OCI-LY7 (cell line): ENCODE measurements at regions of chr13 and their contacts with region 1.

Region 1: DNA sequence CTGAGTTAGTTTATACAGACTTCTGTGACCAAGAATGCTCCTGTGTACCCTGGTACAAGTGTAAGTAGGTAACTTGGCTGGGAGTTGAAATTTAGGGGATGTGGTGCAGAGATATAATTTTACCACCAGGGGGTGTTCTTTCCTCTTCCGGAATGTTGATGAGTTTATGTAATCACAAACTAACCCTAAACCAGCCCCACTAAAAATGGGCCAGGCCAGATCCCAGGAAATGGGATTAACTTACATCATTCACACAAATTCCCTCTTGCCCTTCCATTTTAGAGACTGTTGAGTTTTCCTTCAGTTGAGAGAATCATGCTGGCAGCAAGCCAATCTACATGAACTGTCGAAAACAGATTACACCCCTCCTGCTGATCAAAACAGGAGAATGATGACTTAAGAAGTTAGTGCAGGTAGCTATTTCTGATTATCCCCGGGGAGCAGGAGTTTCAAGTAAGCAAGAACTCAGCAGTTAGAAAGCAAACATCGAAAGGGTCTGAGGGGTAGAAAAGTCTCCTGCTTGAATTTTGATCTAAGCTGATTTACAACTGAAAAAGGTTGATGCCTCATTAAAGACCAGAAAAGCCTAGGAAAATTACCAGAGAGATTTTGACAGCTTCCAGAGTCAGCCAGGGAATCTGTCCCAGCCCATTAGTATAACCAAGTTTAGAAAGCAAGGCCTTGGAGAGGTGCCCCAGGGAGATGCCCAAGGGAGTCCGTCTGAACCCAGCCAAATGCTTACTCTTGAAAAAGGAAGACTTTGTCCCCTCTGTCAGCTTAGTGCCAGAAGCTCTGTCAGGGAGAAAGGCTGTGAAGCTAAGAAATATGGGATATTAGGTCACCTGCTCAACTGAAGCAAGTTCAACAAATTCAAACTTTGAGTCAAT is 32.3 kb upstream of the MED4 start:
- DNase-seq: peak; percentile 72
- H3K4me3 ChIP-seq: no peak overlapping the region
- H3K27ac ChIP-seq: no peak overlapping the region
- H3K4me1 ChIP-seq: peaks cover 4% of the 10 kb centered on the region
- CTCF ChIP-seq: peak; percentile 96

Region 2: GRCh38 chr13:48233046-48233907 is 106.1 kb after region 1 on chr13 and contains the start of gene ITM2B:
- CTCF ChIA-PET with region 1: no interaction called
- POLR2A ChIA-PET with region 1: interaction called, 5 read pairs
- intact Hi-C with region 1: loop called (anchors 1 kb)
- DNase-seq: peak; percentile 77
- H3K4me3 ChIP-seq: peak within 1 kb of the TSS; percentile 76
- H3K27ac ChIP-seq: peak within 1 kb of the TSS; percentile 49
- H3K4me1 ChIP-seq: peaks cover 31% of the 10 kb centered on the region
- CTCF ChIP-seq: peak; percentile 79
- total RNA-seq, gene ITM2B: 14.7 and 21.1 TPM in 2 replicates

Region 3: DNA sequence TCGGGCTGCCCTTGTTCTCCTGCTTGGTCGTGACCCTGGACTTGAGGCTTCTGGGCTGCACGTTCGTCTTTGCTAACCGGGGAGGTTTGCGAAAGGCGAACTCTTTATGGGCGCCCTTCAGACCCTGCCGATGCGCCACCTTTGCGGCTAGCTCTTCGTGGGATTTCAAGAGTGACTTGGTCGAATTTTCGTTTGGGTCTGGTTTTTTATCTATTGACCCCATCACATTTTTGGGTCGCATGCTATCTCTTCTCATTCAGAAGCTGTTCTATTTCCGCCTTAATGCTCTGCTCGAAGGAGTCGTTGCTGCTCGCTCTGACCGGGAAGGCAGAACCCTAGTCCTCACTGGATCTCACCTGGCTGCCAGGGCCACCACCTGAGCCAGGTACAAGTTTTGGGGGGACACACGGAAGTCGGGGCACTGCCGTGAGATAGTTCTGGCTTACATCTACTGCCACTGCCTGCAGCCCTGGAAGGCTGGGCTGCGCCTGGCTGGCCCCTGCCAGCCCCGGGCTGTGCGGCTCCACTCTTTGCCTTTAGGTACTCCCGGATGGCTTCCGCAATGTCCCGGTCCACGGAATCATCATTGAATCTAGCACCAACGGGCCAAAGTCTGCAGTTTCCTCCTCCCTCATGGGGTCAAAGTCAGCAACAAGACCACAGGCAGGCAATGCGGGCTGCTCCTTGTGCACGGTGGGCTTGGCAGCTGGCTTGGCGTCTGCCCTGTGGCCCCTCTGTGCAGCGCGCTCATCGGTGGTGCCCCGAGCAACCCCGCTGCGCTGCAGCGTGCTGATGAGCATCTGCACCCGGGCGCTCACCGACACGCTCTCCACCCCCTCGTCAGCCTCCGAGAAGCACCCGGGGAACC is 192.6 kb after region 1 on chr13:
- CTCF ChIA-PET with region 1: no interaction called
- POLR2A ChIA-PET with region 1: no interaction called
- intact Hi-C with region 1: no loop called
- DNase-seq: no peak
- H3K4me3 ChIP-seq: no peak overlapping the region
- H3K27ac ChIP-seq: no peak overlapping the region
- H3K4me1 ChIP-seq: no peaks in the 10 kb centered on the region
- CTCF ChIP-seq: no peak

Region 4: GRCh38 chr13:48731957-48732569 is 604.9 kb after region 1 on chr13:
- CTCF ChIA-PET with region 1: no interaction called
- POLR2A ChIA-PET with region 1: no interaction called
- intact Hi-C with region 1: no loop called
- DNase-seq: peak; percentile 33
- H3K4me3 ChIP-seq: no peak overlapping the region
- H3K27ac ChIP-seq: no peak overlapping the region
- H3K4me1 ChIP-seq: no peaks in the 10 kb centered on the region
- CTCF ChIP-seq: peak; percentile 81

Region 5: DNA sequence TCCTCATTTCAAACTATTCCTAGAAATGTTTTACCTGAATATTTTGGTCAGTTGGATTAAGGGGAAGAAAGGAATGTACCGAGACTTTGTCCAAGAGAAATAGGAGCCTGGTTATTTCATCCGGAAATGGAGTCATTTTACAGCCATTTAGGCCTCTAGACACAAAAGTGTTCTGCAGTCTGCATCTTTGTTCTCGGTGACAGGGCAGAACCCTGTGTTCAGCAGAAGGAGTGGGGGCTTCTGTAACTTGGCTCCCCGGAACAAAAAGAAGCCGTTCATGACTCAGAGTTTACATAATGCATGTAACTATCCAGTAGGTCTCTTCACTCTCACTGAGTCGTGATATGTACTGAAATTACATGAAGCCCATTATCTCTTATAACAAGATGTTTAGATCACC is 826.9 kb after region 1 on chr13:
- CTCF ChIA-PET with region 1: no interaction called
- POLR2A ChIA-PET with region 1: no interaction called
- intact Hi-C with region 1: no loop called
- DNase-seq: no peak
- H3K4me3 ChIP-seq: no peak overlapping the region
- H3K27ac ChIP-seq: no peak overlapping the region
- H3K4me1 ChIP-seq: no peaks in the 10 kb centered on the region
- CTCF ChIP-seq: no peak